ENCODE measurements at regions of chr5 and their contacts with region 1.

Region 1: GRCh38 chr5:50440651-50441492 is at the start of gene EMB:
- DNase-seq: peak; percentile 93
- H3K4me3 Mint-ChIP-seq: peak within 1 kb of the TSS; percentile 96
- H3K27ac Mint-ChIP-seq: peak within 1 kb of the TSS; percentile 97
- H3K4me1 Mint-ChIP-seq: peaks cover 56% of the 10 kb centered on the region
- H3K27me3 Mint-ChIP-seq: no peaks in the 10 kb centered on the region
- total RNA-seq, gene EMB: 56.3 and 60.3 TPM in 2 replicates

Region 2: GRCh38 chr5:50325237-50325832 is 115.5 kb before region 1 on chr5:
- intact Hi-C with region 1: loop called (anchors 5 kb)
- DNase-seq: peak; percentile 66
- H3K4me3 Mint-ChIP-seq: no peak overlapping the region
- H3K27ac Mint-ChIP-seq: no peak overlapping the region
- H3K4me1 Mint-ChIP-seq: peaks cover 18% of the 10 kb centered on the region
- H3K27me3 Mint-ChIP-seq: peaks cover 2% of the 10 kb centered on the region

Region 3: GRCh38 chr5:50476549-50476948 is 35.7 kb after region 1 on chr5:
- intact Hi-C with region 1: loop called (anchors 5 kb)
- DNase-seq: no peak
- H3K4me3 Mint-ChIP-seq: peak overlapping the region; percentile 61
- H3K27ac Mint-ChIP-seq: no peak overlapping the region
- H3K4me1 Mint-ChIP-seq: peaks cover 34% of the 10 kb centered on the region
- H3K27me3 Mint-ChIP-seq: no peaks in the 10 kb centered on the region

Region 4: GRCh38 chr5:50593681-50594080 is 152.8 kb after region 1 on chr5:
- intact Hi-C with region 1: loop called (anchors 5 kb)
- DNase-seq: peak; percentile 76
- H3K4me3 Mint-ChIP-seq: peak overlapping the region; percentile 41
- H3K27ac Mint-ChIP-seq: peak overlapping the region; percentile 49
- H3K4me1 Mint-ChIP-seq: peaks cover 41% of the 10 kb centered on the region
- H3K27me3 Mint-ChIP-seq: no peaks in the 10 kb centered on the region

Region 5: DNA sequence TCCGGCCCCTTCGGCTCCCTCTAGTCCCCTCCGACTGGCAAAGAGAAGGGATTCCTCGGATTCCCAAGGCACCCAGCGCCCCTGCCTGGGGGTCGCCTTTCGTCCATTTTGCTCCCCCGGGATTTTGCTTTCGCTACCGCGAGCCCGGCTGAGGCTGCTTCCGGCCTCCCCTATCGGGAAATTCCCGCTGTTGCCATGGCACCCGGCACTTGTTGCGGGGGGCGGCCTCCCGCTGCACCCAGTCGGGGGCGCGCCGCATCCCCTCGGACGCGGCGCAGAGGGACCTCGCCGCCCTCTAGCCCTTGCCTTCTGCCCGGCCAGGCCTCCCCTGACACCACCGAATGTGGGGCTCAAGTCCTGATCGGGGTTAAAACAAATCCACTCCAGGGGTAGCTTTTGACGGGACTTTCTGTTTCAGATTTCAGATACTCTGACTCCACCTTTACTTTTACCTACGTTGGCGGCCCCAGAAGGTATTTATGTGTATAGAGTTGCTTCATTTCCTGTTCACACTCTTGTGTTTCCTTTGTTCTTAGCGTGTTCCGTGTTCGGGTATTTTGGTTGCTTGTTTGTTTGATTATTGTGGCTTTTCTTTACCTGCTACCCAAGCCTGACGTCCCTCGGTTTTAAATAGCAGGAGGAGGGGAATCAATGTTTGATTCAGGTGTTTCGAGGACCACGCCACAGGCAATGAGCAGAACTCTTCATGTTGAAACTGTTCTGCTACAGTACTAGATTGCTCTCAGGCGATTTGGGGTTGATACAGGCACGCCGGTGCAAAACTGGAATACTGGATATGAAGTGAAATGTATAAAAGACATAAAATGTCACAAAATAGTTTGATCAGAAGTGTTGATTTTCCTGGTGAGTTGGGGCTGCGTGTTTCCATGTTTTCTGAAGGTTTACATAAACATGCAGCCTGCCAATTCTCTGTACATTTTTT is 227.1 kb after region 1 on chr5:
- intact Hi-C with region 1: loop called (anchors 1 kb)
- DNase-seq: peak; percentile 95
- H3K4me3 Mint-ChIP-seq: peak overlapping the region; percentile 99
- H3K27ac Mint-ChIP-seq: peak overlapping the region; percentile 100
- H3K4me1 Mint-ChIP-seq: peaks cover 48% of the 10 kb centered on the region
- H3K27me3 Mint-ChIP-seq: no peaks in the 10 kb centered on the region

Region 6: GRCh38 chr5:50727149-50727496 is 286.3 kb after region 1 on chr5:
- intact Hi-C with region 1: no loop called
- DNase-seq: no peak
- H3K4me3 Mint-ChIP-seq: no peak overlapping the region
- H3K27ac Mint-ChIP-seq: peak overlapping the region; percentile 74
- H3K4me1 Mint-ChIP-seq: peaks cover 19% of the 10 kb centered on the region
- H3K27me3 Mint-ChIP-seq: no peaks in the 10 kb centered on the region

Region 7: GRCh38 chr5:50751064-50751657 is 310.3 kb after region 1 on chr5:
- intact Hi-C with region 1: loop called (anchors 2 kb)
- DNase-seq: peak; percentile 81
- H3K4me3 Mint-ChIP-seq: no peak overlapping the region
- H3K27ac Mint-ChIP-seq: no peak overlapping the region
- H3K4me1 Mint-ChIP-seq: peaks cover 26% of the 10 kb centered on the region
- H3K27me3 Mint-ChIP-seq: no peaks in the 10 kb centered on the region

Measured in activated CD4-positive, alpha-beta T cell treated with anti-CD3 and anti-CD28 coated beads, Interleukin-2, amount 10 ng/mL, durations not matched to agents 24 days and 14 days (primary cell).